ENCODE measurements at regions of chr7 and their contacts with region 1.

Region 1: GRCh38 chr7:43711503-43711902 is 17.8 kb downstream of the COA1 start:
- DNase-seq: no peak
- ATAC-seq: no peak
- H3K4me3 ChIP-seq: no peak overlapping the region
- H3K27ac ChIP-seq: no peak overlapping the region
- H3K4me1 ChIP-seq: peaks cover 6% of the 10 kb centered on the region
- H3K27me3 ChIP-seq: no peaks in the 10 kb centered on the region
- CTCF ChIP-seq: no peak

Region 2: DNA sequence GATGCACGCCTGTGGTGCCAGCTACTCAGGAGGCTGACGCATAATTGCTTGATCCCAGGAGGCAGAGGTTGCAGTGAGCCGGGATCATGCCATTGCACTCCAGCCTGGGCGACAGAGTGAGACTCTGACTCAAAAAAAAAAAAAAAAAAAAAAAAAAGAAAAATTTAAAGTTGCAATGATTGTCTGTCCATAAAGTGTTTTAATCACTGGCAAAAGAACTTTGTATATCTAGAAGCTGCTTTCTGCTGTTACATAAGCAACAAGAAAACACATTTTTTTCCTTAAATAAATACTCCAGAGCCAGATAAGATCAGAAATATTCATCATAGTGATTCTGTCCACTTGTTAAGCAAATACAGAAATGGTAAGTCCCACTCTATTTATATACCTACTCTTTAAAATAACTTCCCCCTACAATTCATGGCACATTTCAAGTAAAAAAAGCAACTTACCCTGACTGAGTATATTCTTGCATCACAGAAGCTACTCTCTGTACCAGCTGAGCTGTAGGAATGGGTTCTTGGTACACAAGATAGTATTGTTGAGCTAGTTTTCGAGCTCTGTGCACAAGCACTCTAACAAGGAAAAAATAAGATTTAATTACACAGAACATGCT is 787.2 kb before region 1 on chr7:
- intact Hi-C with region 1: loop called in 1 of 2 experiments (anchors 10 kb)
- DNase-seq: no peak
- ATAC-seq: no peak
- H3K4me3 ChIP-seq: no peak overlapping the region
- H3K27ac ChIP-seq: no peak overlapping the region
- H3K4me1 ChIP-seq: peaks cover 6% of the 10 kb centered on the region
- H3K27me3 ChIP-seq: no peaks in the 10 kb centered on the region
- CTCF ChIP-seq: no peak

Region 3: DNA sequence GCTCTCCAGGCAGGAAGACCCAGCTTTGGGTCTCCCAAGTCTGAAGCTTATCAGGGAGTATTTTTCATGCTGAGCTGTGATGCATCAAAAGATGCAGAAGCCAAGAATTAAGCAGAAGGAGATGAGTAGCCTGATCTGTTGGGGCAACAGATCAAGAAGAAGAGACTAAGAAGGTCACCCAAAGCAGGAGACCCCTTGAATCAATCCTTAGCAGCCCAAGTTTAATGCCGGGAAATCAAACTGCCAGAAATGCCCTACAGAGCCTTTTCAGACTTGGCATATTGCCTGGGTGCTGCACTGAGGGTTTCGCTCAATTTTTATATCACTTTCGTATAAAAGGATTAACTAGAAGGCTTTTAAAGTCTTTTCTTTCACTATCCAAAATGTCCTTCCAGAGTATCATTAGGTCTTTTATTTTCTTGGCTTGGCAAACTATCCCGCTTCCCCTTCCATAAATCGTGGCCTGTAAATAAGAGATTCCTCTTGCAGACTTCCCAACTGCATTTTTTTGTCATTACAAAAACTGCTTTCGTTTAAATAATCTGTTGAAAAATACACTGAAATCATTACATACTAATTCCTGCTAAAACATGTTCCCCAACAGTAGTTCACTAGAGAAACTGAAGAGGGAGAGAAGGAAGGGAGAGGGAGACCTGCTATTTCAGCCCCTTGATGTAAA is 177.6 kb before region 1 on chr7:
- intact Hi-C with region 1: no loop called
- DNase-seq: no peak
- ATAC-seq: no peak
- H3K4me3 ChIP-seq: no peak overlapping the region
- H3K27ac ChIP-seq: no peak overlapping the region
- H3K4me1 ChIP-seq: no peaks in the 10 kb centered on the region
- H3K27me3 ChIP-seq: no peaks in the 10 kb centered on the region
- CTCF ChIP-seq: no peak